T-cell (primary cell): ENCODE measurements at regions of chr1 and their contacts with region 1.

Region 1: GRCh38 chr1:160664573-160665051 is 17.8 kb upstream of the SLAMF1 start:
- DNase-seq: peak in 18 of 35 experiments; percentile 10 to 65 (median 30)
- ATAC-seq: peak; percentile 89 to 93 (median 92)
- H3K4me3 ChIP-seq: peak overlapping the region; percentile 4 to 38
- H3K4me3 Mint-ChIP-seq: peak overlapping the region; percentile 43 to 70 (median 50)
- H3K27ac ChIP-seq: peak overlapping the region; percentile 81
- H3K27ac Mint-ChIP-seq: peak overlapping the region; percentile 90 to 92
- H3K4me1 ChIP-seq: peaks cover 42 to 43% of the 10 kb centered on the region in 2 experiments
- H3K4me1 Mint-ChIP-seq: peaks cover 66 to 83% (median 67%) of the 10 kb centered on the region in 3 donors
- H3K27me3 ChIP-seq: no peaks in the 10 kb centered on the region
- H3K27me3 Mint-ChIP-seq: no peaks in the 10 kb centered on the region

Region 2: DNA sequence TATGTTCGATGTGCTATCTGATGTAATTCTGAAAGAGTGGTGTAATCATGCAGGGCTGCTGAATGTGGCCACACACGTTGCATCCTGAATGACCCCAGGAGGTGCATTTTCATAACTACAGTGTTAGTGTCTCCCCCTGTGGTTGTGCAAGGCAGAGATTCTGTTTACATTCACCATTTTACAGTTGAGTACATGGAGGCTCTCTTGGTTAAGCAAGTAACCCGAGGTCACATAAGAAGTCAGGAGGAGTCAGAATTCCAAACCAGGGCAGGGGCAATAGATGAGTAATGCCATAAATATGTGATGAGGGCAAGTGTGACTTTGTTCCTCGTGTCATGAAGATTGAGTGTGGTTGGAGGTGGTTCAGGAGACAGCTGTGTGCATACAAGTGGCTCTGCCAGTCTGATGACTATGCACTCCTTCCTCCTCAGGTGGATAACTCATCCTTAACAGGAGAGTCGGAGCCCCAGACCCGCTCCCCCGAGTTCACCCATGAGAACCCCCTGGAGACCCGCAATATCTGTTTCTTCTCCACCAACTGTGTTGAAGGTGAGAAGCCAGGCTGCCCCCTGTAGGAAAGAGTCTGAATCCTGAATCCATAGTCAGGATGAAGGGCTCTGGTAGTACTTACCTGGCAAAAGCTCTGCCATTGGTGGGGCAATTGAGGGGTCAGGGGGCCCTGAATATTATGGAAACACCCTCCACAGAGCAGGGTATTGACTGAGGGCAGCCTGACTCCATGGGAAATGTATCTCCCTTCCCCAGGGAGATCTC is 539.7 kb before region 1 on chr1:
- CTCF ChIA-PET with region 1: no interaction called
- POLR2A ChIA-PET with region 1: no interaction called
- DNase-seq: no peak
- ATAC-seq: no peak
- H3K4me3 ChIP-seq: no peak overlapping the region
- H3K4me3 Mint-ChIP-seq: no peak overlapping the region
- H3K27ac ChIP-seq: no peak overlapping the region
- H3K27ac Mint-ChIP-seq: no peak overlapping the region
- H3K4me1 ChIP-seq: no peaks in the 10 kb centered on the region
- H3K4me1 Mint-ChIP-seq: no peaks in the 10 kb centered on the region
- H3K27me3 ChIP-seq: peaks cover 0 to 8% of the 10 kb centered on the region in 2 experiments
- H3K27me3 Mint-ChIP-seq: peaks cover 5 to 8% of the 10 kb centered on the region in 2 donors

Region 3: GRCh38 chr1:160629286-160630210 is 35.1 kb before region 1 on chr1:
- CTCF ChIA-PET with region 1: no interaction called
- POLR2A ChIA-PET with region 1: interaction called in 1 of 2 experiments, 11 read pairs
- DNase-seq: peak; percentile 47 to 92 (median 80)
- ATAC-seq: peak; percentile 85 to 91 (median 87)
- H3K4me3 ChIP-seq: peak overlapping the region; percentile 33 to 50
- H3K4me3 Mint-ChIP-seq: peak overlapping the region; percentile 66 to 78 (median 73)
- H3K27ac ChIP-seq: peak overlapping the region; percentile 95
- H3K27ac Mint-ChIP-seq: peak overlapping the region; percentile 96 to 98
- H3K4me1 ChIP-seq: peaks cover 81 to 95% of the 10 kb centered on the region in 2 experiments
- H3K4me1 Mint-ChIP-seq: peaks cover 92 to 98% (median 98%) of the 10 kb centered on the region in 3 donors
- H3K27me3 ChIP-seq: no peaks in the 10 kb centered on the region
- H3K27me3 Mint-ChIP-seq: no peaks in the 10 kb centered on the region